Activated T-helper 2 cell treated with anti-CD3 and anti-CD28 coated beads, Interferon-gamma antibody, Interleukin-2, Interleukin-4, amounts not matched to agents 10 μg/mL and 5 μg/mL and 100 μg/mL, durations not matched to agents 14 hours and 24 hours and 36 hours (primary cell): ENCODE measurements at regions of chr15 and their contacts with region 1.

Region 1: GRCh38 chr15:42920519-42921227 is at the start of gene TTBK2:
- DNase-seq: peak; percentile 96
- H3K4me3 Mint-ChIP-seq: peak within 1 kb of the TSS; percentile 93
- H3K27ac Mint-ChIP-seq: peak within 1 kb of the TSS; percentile 87
- H3K4me1 Mint-ChIP-seq: peaks cover 30% of the 10 kb centered on the region
- H3K27me3 Mint-ChIP-seq: no peaks in the 10 kb centered on the region
- total RNA-seq, gene TTBK2: 13.0 and 13.1 TPM in 2 replicates

Region 2: DNA sequence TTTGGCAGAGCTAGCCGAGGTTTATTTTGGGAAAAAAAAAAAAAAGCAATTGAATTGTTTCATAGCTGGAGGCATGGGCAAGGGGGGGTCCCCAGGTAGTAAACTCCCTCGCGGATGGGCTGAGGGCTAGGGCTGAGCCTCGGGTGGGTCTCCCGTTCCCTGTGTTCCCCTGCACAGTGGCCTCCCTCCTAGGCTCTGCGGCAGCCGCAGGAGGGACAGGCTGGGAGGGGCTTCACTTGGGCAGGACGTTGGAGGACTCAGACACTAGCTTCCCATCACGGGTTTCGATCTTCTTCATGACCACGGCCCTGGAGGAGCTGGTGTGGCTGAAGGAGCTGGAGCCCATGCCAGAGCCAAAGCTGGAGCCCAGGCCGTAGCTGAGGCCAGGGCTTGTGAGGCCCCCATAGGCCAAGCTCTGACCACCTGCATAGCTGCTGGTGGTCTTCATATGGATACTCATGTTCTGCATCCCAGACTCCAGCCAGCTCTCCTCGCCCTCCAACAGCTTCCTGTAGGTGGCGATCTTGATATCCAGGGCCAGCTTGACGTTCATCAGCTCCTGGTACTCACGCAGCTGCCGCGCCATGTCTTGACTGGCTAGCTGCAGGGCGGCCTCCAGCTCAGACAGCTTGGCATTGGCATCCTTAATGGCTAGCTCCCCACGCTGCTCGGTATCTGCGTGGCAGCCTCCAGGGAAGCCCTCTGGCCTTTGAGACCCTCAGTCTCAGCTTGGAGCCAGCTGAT is 119.8 kb before region 1 on chr15:
- intact Hi-C with region 1: loop called (anchors 10 kb)
- DNase-seq: no peak
- H3K4me3 Mint-ChIP-seq: no peak overlapping the region
- H3K27ac Mint-ChIP-seq: no peak overlapping the region
- H3K4me1 Mint-ChIP-seq: peaks cover 12% of the 10 kb centered on the region
- H3K27me3 Mint-ChIP-seq: no peaks in the 10 kb centered on the region